Activated CD8-positive, alpha-beta T cell treated with anti-CD3 and anti-CD28 coated beads for 36 hours (primary cell): ENCODE measurements at regions of chr15 and their contacts with region 1.

Region 1: DNA sequence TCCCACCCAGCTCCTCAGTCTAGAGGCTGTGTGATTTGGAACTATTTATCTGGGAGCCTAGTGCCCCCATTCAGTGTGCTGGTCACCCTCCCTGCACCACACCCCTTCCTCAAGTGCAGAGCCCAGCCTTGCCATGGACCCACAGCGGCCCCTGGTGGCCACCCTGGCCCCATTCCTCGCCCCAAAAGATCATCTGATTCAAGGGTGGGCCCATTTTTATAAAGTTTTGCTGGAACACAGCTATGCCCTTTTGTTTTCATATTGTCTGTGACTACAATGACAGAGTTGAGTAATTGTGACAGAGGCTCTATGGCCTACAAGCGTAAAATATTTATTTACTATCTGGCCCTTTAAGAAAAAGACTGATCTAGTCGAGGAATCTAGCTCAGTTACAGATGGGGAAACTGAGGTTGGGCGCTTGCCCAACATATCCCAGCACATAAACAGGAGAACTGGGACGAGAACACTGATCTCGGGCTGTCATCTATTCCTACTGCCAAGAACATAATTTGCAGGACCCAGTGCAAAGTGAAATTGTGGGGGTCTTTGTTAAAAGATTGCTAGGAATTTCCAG is 1.8 kb downstream of the FES start:
- DNase-seq: peak; percentile 85
- ATAC-seq: peak; percentile 69
- H3K4me3 Mint-ChIP-seq: no peak overlapping the region
- H3K27ac Mint-ChIP-seq: peak overlapping the region; percentile 55
- H3K4me1 Mint-ChIP-seq: peaks cover 7% of the 10 kb centered on the region
- H3K27me3 Mint-ChIP-seq: peaks cover 7% of the 10 kb centered on the region
- CTCF ChIP-seq: peak; percentile 99

Region 2: GRCh38 chr15:90697181-90697580 is 188.9 kb before region 1 on chr15:
- CTCF ChIA-PET with region 1: interaction called, 14 read pairs
- POLR2A ChIA-PET with region 1: no interaction called
- intact Hi-C with region 1: no loop called
- DNase-seq: peak; percentile 36
- ATAC-seq: peak; percentile 75
- H3K4me3 Mint-ChIP-seq: no peak overlapping the region
- H3K27ac Mint-ChIP-seq: no peak overlapping the region
- H3K4me1 Mint-ChIP-seq: peaks cover 10% of the 10 kb centered on the region
- H3K27me3 Mint-ChIP-seq: no peaks in the 10 kb centered on the region
- CTCF ChIP-seq: no peak

Region 3: DNA sequence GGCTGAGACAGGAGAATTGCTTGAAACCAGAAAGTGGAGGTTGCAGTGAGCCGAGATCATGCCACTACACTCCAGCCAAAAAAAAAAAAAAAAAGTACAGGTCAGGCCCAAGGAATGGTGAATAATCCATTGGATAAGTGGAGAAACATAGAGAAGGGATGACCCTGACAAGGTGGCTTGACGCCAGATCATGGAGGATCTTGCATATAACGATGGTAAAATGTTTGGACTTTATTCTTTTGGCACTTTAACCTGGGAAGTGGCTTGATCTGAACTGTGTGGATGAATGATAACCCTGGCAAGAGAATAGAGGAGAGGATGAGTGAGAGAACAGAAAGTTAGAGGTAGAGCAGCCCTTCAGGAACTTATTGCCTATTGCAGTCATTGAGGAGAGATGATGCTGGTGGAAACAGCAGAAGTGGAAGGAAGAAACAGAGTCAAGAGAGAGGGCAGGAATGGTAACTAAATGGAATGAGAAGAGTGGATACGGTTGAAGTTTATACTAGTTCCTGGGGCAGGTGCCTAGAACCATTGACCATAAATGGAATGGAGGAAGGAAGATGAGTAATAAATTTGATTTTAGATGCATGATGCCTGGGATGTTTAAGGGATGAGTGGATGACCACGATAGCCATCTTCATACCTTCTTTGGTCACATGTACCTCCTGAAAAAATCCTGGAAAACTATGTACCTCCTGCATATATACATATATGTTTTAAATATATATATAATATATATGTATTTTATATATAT is 111.2 kb before region 1 on chr15:
- CTCF ChIA-PET with region 1: interaction called, 11 read pairs
- POLR2A ChIA-PET with region 1: no interaction called
- intact Hi-C with region 1: no loop called
- DNase-seq: no peak
- ATAC-seq: no peak
- H3K4me3 Mint-ChIP-seq: no peak overlapping the region
- H3K27ac Mint-ChIP-seq: no peak overlapping the region
- H3K4me1 Mint-ChIP-seq: peaks cover 4% of the 10 kb centered on the region
- H3K27me3 Mint-ChIP-seq: no peaks in the 10 kb centered on the region
- CTCF ChIP-seq: no peak

Region 4: GRCh38 chr15:90808517-90809235 is 77.5 kb before region 1 on chr15:
- CTCF ChIA-PET with region 1: interaction called, 19 read pairs
- POLR2A ChIA-PET with region 1: no interaction called
- intact Hi-C with region 1: no loop called
- DNase-seq: no peak
- ATAC-seq: no peak
- H3K4me3 Mint-ChIP-seq: no peak overlapping the region
- H3K27ac Mint-ChIP-seq: no peak overlapping the region
- H3K4me1 Mint-ChIP-seq: peaks cover 14% of the 10 kb centered on the region
- H3K27me3 Mint-ChIP-seq: no peaks in the 10 kb centered on the region
- CTCF ChIP-seq: no peak

Region 5: DNA sequence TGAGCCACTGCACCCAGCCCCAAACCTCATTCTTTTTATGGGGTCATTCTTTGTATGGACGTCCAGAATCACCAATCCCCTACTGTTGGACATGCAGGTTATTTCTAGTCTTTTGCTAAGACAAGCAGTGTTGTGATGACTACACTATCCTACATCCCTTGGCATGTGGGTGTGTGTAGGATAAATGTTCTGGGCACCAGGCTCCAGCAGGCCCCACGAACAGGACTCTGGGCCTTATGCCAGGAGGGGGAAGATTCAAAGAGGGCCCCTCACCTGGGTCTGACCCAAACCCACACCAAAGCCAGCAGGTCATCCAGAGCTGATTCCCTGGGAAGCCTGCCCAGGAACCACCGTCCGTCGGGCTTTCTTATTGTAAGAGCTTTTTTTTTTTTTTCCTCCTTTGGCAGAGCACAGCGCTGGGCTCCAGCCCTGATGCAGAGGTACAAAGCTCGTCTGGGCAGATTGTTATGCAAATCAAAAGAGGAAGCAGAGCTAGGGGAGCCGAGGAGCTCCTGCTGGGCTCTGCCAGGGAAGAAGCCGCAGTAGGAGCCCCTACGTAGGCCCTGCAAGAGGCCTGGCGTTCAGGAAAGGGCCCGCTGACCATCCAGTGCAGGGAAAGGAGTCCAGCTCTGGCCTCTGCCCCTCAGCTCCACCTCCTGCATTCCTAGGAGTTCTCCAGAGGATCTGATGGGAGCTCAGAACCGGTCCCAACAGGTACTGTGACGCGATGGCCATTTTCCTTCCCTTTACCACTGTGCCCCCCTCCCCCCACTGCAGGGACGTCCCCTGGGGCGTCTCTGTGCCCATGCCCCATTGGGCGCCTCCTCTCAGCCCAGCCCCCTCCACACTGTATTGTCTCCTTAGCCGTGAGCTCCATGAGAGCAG is 46.7 kb before region 1 on chr15:
- CTCF ChIA-PET with region 1: interaction called, 16 read pairs
- POLR2A ChIA-PET with region 1: interaction called, 3 read pairs
- intact Hi-C with region 1: no loop called
- DNase-seq: no peak
- ATAC-seq: no peak
- H3K4me3 Mint-ChIP-seq: peak overlapping the region; percentile 63
- H3K27ac Mint-ChIP-seq: peak overlapping the region; percentile 52
- H3K4me1 Mint-ChIP-seq: peaks cover 41% of the 10 kb centered on the region
- H3K27me3 Mint-ChIP-seq: no peaks in the 10 kb centered on the region
- CTCF ChIP-seq: no peak

Region 6: GRCh38 chr15:90902040-90902839 is 16.1 kb after region 1 on chr15:
- CTCF ChIA-PET with region 1: interaction called, 89 read pairs
- POLR2A ChIA-PET with region 1: interaction called, 7 read pairs
- intact Hi-C with region 1: no loop called
- DNase-seq: peak; percentile 79
- ATAC-seq: peak; percentile 73
- H3K4me3 Mint-ChIP-seq: peak overlapping the region; percentile 85
- H3K27ac Mint-ChIP-seq: peak overlapping the region; percentile 94
- H3K4me1 Mint-ChIP-seq: peaks cover 24% of the 10 kb centered on the region
- H3K27me3 Mint-ChIP-seq: no peaks in the 10 kb centered on the region
- CTCF ChIP-seq: peak; percentile 77

Region 7: GRCh38 chr15:90970274-90970673 is 84.1 kb after region 1 on chr15:
- CTCF ChIA-PET with region 1: no interaction called
- POLR2A ChIA-PET with region 1: no interaction called
- intact Hi-C with region 1: no loop called
- DNase-seq: no peak
- ATAC-seq: no peak
- H3K4me3 Mint-ChIP-seq: no peak overlapping the region
- H3K27ac Mint-ChIP-seq: no peak overlapping the region
- H3K4me1 Mint-ChIP-seq: no peaks in the 10 kb centered on the region
- H3K27me3 Mint-ChIP-seq: no peaks in the 10 kb centered on the region
- CTCF ChIP-seq: no peak

Region 8: GRCh38 chr15:91022075-91022835 is 136.1 kb after region 1 on chr15 and contains the start of gene VPS33B:
- CTCF ChIA-PET with region 1: no interaction called
- POLR2A ChIA-PET with region 1: no interaction called
- intact Hi-C with region 1: no loop called
- DNase-seq: peak; percentile 82
- ATAC-seq: peak; percentile 81
- H3K4me3 Mint-ChIP-seq: peak within 1 kb of the TSS; percentile 83
- H3K27ac Mint-ChIP-seq: peak within 1 kb of the TSS; percentile 90
- H3K4me1 Mint-ChIP-seq: peaks cover 30% of the 10 kb centered on the region
- H3K27me3 Mint-ChIP-seq: no peaks in the 10 kb centered on the region
- CTCF ChIP-seq: no peak
- total RNA-seq, gene VPS33B: 22.2 to 22.9 TPM

Region 9: GRCh38 chr15:91032919-91033803 is 147.0 kb after region 1 on chr15:
- CTCF ChIA-PET with region 1: no interaction called
- POLR2A ChIA-PET with region 1: no interaction called
- intact Hi-C with region 1: no loop called
- DNase-seq: peak; percentile 76
- ATAC-seq: peak; percentile 89
- H3K4me3 Mint-ChIP-seq: no peak overlapping the region
- H3K27ac Mint-ChIP-seq: no peak overlapping the region
- H3K4me1 Mint-ChIP-seq: no peaks in the 10 kb centered on the region
- H3K27me3 Mint-ChIP-seq: no peaks in the 10 kb centered on the region
- CTCF ChIP-seq: peak; percentile 61